ENCODE measurements at regions of chr14 and their contacts with region 1.

Region 1: GRCh38 chr14:49620182-49621113 is at the starts of genes MGAT2 and RPL36AL:
- DNase-seq: peak; percentile 84 to 97 (median 91)
- ATAC-seq: peak; percentile 79
- H3K4me3 ChIP-seq: peak within 1 kb of the TSS; percentile 95
- H3K4me3 Mint-ChIP-seq: peak within 1 kb of the TSS; percentile 99
- H3K27ac ChIP-seq: peak within 1 kb of the TSS; percentile 98 to 99
- H3K27ac Mint-ChIP-seq: peak within 1 kb of the TSS; percentile 100
- H3K4me1 ChIP-seq: peaks cover 36% of the 10 kb centered on the region
- H3K4me1 Mint-ChIP-seq: peaks cover 73% of the 10 kb centered on the region
- H3K27me3 ChIP-seq: no peaks in the 10 kb centered on the region
- H3K27me3 Mint-ChIP-seq: no peaks in the 10 kb centered on the region
- CTCF ChIP-seq: peak; percentile 22
- total RNA-seq, gene MGAT2: 15.0 to 15.1 TPM
- total RNA-seq, gene RPL36AL: 339 to 370 TPM

Region 2: DNA sequence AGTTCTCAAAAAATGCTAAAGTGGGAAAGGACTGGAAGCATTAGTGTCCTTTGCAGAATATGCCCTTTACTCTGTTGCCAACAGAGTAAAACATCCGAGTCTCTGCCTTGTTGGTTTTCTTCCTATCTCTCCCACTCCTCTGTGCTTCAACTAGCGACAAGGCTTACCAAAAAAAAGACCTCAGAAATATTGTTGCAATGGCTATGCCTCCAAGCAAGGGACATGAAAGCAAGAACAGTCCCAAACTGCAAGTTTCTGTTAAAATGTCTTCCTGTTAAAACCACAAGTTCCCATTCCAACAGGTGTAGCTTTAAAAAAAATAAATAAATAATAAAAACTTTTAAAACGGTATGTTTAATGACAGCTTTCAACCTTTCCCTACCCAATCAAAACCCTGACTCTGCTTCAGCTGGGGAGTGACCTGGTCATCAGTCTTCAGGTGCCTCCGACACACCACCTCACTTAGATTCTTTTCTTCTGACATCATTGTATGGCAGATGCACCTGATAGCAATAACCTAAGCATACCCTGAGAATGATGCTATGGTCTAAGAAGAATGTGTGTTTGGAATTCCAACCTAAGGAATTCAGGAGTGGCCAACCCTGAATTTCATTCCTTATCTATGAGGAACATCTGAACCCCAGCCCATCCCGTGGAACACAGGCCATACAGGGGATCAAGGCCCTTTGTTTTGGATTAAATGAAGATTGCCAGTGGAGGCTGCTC is 115.2 kb before region 1 on chr14:
- CTCF ChIA-PET with region 1: no interaction called
- POLR2A ChIA-PET with region 1: no interaction called
- intact Hi-C with region 1: no loop called
- DNase-seq: no peak
- ATAC-seq: no peak
- H3K4me3 ChIP-seq: no peak overlapping the region
- H3K4me3 Mint-ChIP-seq: no peak overlapping the region
- H3K27ac ChIP-seq: no peak overlapping the region
- H3K27ac Mint-ChIP-seq: no peak overlapping the region
- H3K4me1 ChIP-seq: no peaks in the 10 kb centered on the region
- H3K4me1 Mint-ChIP-seq: no peaks in the 10 kb centered on the region
- H3K27me3 ChIP-seq: peaks cover 0 to 13% of the 10 kb centered on the region in 2 experiments
- H3K27me3 Mint-ChIP-seq: peaks cover 26% of the 10 kb centered on the region
- CTCF ChIP-seq: no peak

Region 3: GRCh38 chr14:49598485-49599300 is 21.8 kb before region 1 on chr14 and contains the start of gene LRR1:
- CTCF ChIA-PET with region 1: interaction called, 14 read pairs
- POLR2A ChIA-PET with region 1: interaction called, 140 read pairs
- intact Hi-C with region 1: loop called (anchors 1 to 2 kb)
- DNase-seq: peak; percentile 72 to 91 (median 84)
- ATAC-seq: peak; percentile 75
- H3K4me3 ChIP-seq: peak within 1 kb of the TSS; percentile 98
- H3K4me3 Mint-ChIP-seq: peak within 1 kb of the TSS; percentile 97
- H3K27ac ChIP-seq: peak within 1 kb of the TSS; percentile 91 to 95
- H3K27ac Mint-ChIP-seq: peak within 1 kb of the TSS; percentile 98
- H3K4me1 ChIP-seq: peaks cover 13% of the 10 kb centered on the region
- H3K4me1 Mint-ChIP-seq: peaks cover 43% of the 10 kb centered on the region
- H3K27me3 ChIP-seq: no peaks in the 10 kb centered on the region
- H3K27me3 Mint-ChIP-seq: no peaks in the 10 kb centered on the region
- CTCF ChIP-seq: no peak
- total RNA-seq, gene LRR1: 3.2 to 5.8 TPM

Region 4: DNA sequence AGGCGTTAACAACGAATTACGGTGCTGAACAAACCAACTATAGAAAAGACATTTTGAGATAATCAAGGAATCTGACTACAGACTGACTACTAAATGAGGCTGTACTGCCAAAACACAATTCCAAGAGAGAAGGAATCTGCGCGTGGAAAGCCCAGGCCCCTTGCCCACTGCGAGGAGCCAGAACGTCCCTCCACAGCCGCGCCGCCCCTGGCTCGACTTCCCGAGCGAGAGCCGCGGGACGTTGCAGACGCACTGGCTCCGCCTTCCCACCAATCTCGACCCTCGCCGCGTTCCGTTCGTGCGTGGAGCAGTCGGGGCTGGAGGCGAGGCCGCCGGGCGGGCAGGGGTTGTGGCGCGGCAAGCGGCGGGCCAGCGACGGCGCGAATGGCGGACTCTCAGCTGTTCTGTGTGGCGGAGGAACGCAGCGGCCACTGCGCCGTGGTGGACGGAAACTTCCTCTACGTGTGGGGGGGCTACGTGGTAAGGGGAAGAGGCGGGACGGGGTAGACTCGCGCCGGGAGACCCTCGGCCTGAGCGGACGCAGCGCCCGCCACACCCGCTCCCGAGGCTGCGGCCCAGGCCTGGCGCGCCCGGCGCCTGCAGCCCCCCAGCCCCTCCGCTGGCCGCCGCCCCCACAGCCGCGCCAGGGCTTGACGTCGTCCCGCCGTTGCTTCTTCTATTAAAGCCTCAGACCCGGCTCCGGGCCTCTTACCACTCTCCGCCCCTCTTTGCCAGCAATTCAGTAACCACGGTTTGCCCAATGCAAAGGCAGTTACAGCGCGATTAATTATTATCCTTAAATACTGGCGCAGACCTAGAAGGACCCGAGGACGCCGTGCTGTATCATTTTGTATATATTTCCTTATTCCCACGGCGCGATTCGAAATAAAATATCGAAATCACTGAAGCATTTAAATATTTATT is 72.6 kb after region 1 on chr14 and contains the start of gene KLHDC1:
- CTCF ChIA-PET with region 1: interaction called, 3 read pairs
- POLR2A ChIA-PET with region 1: interaction called, 22 read pairs
- intact Hi-C with region 1: no loop called
- DNase-seq: peak; percentile 66 to 90 (median 78)
- ATAC-seq: peak; percentile 85
- H3K4me3 ChIP-seq: peak within 1 kb of the TSS; percentile 69
- H3K4me3 Mint-ChIP-seq: peak within 1 kb of the TSS; percentile 97
- H3K27ac ChIP-seq: peak within 1 kb of the TSS; percentile 60 to 70
- H3K27ac Mint-ChIP-seq: peak within 1 kb of the TSS; percentile 88
- H3K4me1 ChIP-seq: peaks cover 10% of the 10 kb centered on the region
- H3K4me1 Mint-ChIP-seq: peaks cover 50% of the 10 kb centered on the region
- H3K27me3 ChIP-seq: no peaks in the 10 kb centered on the region
- H3K27me3 Mint-ChIP-seq: no peaks in the 10 kb centered on the region
- CTCF ChIP-seq: no peak
- total RNA-seq, gene KLHDC1: 9.8 to 11.8 TPM

Region 5: DNA sequence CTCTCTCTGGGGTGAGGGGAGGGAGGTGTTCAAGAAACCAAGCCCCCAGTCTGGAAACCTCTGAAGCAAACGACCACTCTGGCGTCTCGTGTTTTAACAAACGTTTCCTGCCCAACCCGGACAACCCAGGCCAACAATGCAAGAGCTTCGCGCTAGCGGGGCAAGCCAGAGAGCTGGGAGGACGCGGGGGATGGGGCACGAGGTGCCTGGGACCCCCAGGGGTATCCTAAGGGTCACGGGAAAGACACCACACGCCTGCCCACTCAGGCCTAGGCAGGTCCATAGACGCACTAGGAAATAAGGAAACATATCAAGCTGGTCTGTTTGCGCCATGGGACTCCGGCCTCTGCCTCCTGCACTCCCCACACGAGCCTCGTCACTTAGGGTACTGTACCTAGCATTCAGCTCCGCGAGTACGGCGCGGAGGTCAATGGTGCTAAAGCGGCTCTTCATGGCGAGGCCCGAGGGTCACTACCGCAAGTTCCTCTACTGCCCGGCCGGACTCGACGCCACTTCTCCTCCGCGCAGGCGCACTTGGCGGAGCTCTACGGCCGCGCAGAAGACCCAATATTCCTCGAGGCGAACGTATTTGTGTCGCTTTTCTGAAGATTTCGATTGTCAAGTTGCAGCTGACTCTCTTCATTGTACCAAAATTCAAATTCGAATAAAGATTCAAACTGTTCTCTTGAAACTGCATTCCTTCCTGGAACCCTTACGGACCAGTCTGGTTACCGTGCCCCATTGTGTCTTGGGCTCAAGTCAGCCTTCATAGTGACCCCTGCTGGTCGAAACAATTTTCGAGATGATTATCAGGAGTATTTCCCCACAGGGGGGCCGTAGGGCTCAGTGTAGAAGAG is 232.1 kb after region 1 on chr14 and contains the start of gene NEMF:
- CTCF ChIA-PET with region 1: no interaction called
- POLR2A ChIA-PET with region 1: interaction called, 30 read pairs
- intact Hi-C with region 1: no loop called
- DNase-seq: peak; percentile 67 to 91 (median 72)
- ATAC-seq: peak; percentile 75
- H3K4me3 ChIP-seq: peak within 1 kb of the TSS; percentile 97
- H3K4me3 Mint-ChIP-seq: peak within 1 kb of the TSS; percentile 99
- H3K27ac ChIP-seq: peak within 1 kb of the TSS; percentile 64 to 80
- H3K27ac Mint-ChIP-seq: peak within 1 kb of the TSS; percentile 91
- H3K4me1 ChIP-seq: peaks cover 17% of the 10 kb centered on the region
- H3K4me1 Mint-ChIP-seq: peaks cover 46% of the 10 kb centered on the region
- H3K27me3 ChIP-seq: no peaks in the 10 kb centered on the region
- H3K27me3 Mint-ChIP-seq: no peaks in the 10 kb centered on the region
- CTCF ChIP-seq: peak; percentile 89
- total RNA-seq, gene NEMF: 96.0 to 97.7 TPM

Region 6: DNA sequence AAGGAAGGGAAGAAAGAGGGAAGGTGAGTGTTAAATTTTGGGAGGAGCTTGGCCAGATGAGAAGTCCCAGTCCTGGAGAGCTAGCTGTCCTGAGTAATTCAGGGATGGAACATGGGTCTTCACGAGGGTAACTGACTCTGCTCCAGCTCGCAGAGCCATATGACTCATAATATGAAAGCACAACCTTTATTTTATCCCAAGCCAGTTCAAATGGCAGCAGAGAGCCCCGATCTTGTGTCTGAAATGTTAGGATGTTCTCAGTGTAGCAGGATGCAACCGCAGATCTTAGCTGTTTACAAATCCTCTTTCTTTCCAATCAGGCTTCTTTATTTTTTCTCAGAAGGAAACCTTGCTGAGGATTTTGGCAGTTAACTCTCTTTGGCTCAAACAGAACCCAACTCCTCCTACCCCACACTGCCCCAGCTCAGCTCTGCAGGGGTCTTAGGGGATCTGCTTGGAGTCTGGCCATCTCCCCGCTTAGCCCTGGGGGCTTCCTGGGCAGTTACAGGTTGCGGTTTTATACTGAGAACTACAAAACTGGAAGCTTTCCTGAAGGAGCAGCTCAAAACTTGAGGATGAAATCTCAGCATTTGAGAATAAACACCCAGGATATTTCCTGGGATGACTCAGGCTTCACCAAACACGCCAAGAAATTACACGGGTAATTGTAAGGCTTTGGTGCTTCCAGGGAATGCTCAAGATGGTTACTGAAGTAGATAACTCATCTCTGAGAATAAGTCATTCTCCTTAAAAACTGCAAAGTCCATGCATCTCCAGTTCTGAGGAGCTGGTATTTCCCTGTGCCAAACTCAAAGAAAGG is 403.4 kb after region 1 on chr14:
- CTCF ChIA-PET with region 1: no interaction called
- POLR2A ChIA-PET with region 1: no interaction called
- intact Hi-C with region 1: no loop called
- DNase-seq: no peak
- ATAC-seq: no peak
- H3K4me3 ChIP-seq: no peak overlapping the region
- H3K4me3 Mint-ChIP-seq: no peak overlapping the region
- H3K27ac ChIP-seq: no peak overlapping the region
- H3K27ac Mint-ChIP-seq: no peak overlapping the region
- H3K4me1 ChIP-seq: peaks cover 15% of the 10 kb centered on the region
- H3K4me1 Mint-ChIP-seq: peaks cover 23% of the 10 kb centered on the region
- H3K27me3 ChIP-seq: no peaks in the 10 kb centered on the region
- H3K27me3 Mint-ChIP-seq: no peaks in the 10 kb centered on the region
- CTCF ChIP-seq: no peak

Region 7: DNA sequence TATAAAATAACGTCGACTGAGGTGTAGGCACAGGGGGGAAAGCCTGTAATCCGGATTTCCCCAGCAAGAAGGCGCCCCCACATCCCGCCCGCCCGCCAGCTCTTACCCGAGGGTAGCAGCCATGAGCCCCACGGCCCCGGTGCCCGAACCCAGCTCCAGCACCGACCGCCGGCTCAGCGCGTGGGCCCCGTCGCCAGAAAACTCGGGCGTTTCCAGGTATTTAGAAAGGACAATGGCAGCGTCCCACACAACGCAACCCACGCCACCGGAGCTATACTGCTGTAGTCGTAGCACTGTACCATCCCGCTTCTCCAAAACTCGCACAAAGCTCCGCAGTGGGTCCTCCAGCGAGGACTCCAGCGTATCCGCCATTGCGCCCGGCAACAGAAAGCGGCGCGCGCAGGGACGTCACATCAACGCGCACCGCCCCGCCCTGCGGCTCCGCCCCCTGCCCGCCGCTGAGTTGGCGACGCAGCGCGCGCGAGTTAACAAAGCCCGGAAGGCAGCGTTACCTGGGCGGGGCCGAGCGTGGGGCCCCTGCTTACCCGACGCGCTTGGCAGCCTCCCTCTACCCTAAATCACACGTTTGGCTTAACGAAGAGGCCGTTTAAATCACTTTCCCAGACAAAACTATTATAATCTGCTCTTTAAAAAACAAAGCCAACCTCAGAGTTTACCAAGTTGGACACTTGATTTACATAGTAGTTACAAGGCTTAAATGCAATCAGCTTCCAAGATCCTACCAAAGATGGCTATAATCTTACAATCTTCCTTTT is 495.9 kb after region 1 on chr14 and contains the start of gene VCPKMT:
- CTCF ChIA-PET with region 1: no interaction called
- POLR2A ChIA-PET with region 1: interaction called, 10 read pairs
- intact Hi-C with region 1: loop called in 1 of 2 experiments (anchors 5 kb)
- DNase-seq: peak; percentile 90 to 98 (median 96)
- ATAC-seq: peak; percentile 98
- H3K4me3 ChIP-seq: peak within 1 kb of the TSS; percentile 75
- H3K4me3 Mint-ChIP-seq: peak within 1 kb of the TSS; percentile 99
- H3K27ac ChIP-seq: peak within 1 kb of the TSS; percentile 81 to 95
- H3K27ac Mint-ChIP-seq: peak within 1 kb of the TSS; percentile 99
- H3K4me1 ChIP-seq: peaks cover 15% of the 10 kb centered on the region
- H3K4me1 Mint-ChIP-seq: peaks cover 31% of the 10 kb centered on the region
- H3K27me3 ChIP-seq: no peaks in the 10 kb centered on the region
- H3K27me3 Mint-ChIP-seq: no peaks in the 10 kb centered on the region
- CTCF ChIP-seq: no peak
- total RNA-seq, gene VCPKMT: 30.4 to 32.4 TPM